Esophagus muscularis mucosa (tissue), 4 donors: ENCODE measurements at regions of chr5 and their contacts with region 1.

Region 1: DNA sequence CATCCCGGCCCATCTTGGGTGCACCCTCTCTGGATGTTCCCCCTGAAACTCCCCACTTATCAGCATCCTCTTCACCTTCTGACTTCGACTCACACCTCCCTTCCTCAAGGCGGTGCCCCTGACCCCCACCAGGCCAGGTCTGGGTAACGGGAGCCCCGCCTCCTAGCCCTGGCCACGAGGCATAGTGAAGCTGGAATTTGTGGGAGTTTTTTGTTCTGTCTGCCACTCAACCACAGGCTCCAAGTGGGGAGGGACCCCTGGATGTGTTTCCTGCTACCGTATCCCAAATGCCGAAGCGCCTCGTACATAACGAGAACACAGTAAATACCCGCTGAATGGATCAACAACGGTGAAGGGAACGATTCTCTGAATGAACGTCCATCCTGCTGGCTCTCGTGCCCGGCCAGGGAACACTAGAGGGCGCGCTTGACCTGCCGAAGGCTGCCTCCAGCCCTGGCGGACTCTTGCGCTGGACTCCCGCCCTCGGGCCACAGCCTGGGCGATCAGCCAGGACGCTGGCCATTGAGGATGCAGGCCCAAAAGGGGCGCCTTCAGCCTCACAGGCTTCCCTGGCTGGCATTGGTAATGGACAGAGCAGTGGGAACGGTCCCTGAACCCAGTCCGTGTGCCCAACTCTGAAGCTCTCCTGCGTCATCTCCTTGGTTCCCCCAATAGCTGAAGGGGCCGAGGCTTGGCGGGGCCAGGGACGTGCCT is 47.3 kb upstream of the PHYKPL start:
- DNase-seq: no peak
- H3K4me3 ChIP-seq: no peak overlapping the region
- H3K27ac ChIP-seq: no peak overlapping the region
- H3K4me1 ChIP-seq: peaks cover 5 to 10% (median 8%) of the 10 kb centered on the region in 4 donors
- H3K27me3 ChIP-seq: peaks cover 0 to 39% (median 0%) of the 10 kb centered on the region in 4 donors
- CTCF ChIP-seq: peak; percentile 88 to 94 (median 88)
- EP300 ChIP-seq: no peak
- POLR2A ChIP-seq: no peak

Region 2: DNA sequence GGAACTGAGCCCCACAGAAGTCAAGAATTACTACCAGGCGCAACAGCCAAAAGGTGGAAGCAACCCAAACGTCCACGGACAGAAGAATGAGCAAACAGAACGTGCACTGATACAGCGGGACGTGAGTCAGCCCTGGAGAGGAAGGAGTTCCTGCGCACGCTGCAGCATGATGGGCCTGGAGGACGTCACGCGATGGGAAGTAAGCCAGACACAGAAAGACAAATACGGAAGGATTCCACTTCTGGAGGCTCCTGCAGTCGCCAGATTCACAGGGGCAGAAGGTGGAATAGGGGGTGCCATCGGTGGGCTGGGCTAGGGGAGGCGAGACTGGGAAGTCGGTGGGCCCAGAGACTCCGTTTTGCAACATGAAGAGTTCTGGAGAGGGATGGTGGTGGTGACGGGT is 33.0 kb after region 1 on chr5:
- intact Hi-C with region 1: no loop called
- DNase-seq: no peak
- H3K4me3 ChIP-seq: no peak overlapping the region
- H3K27ac ChIP-seq: no peak overlapping the region
- H3K4me1 ChIP-seq: no peaks in the 10 kb centered on the region
- H3K27me3 ChIP-seq: no peaks in the 10 kb centered on the region
- CTCF ChIP-seq: no peak
- EP300 ChIP-seq: no peak
- POLR2A ChIP-seq: no peak

Region 3: DNA sequence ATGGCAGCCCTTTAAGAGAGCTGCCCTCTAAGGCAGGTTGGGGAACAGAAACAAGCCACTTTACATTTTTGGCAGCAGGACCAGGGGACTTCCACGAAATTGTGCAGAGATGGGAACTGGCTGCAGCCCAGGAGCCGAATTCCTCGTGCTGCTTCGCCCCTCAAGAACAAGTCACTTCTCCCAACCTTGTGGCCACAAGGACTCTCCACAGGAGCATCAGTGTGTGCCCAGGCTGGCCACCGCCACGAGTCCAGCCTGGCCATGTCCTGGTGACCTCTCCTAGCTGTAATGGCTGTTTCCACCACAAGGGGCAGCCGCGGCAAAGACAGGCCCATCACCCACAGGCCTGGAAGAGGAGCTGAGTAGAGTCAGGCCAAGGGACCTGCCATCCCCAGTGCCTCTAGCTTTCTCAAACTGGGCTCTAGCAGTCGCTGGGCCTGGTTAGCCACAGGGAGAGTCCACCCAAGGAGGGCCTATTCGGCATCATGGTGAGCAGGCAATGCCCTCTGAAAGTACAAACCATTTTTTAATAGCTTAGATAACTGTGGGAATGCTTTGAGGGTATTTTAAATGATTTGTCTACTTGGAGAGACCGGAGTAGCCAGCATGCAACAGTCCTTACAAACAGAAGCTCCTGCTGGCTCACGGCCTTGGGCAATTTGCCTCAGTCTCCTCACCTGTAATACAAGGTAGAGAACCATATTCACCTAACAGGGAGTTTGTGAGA is 181.3 kb after region 1 on chr5:
- intact Hi-C with region 1: loop called (anchors 10 kb)
- DNase-seq: no peak
- H3K4me3 ChIP-seq: no peak overlapping the region
- H3K27ac ChIP-seq: no peak overlapping the region
- H3K4me1 ChIP-seq: peaks cover 4 to 12% (median 8%) of the 10 kb centered on the region in 4 donors
- H3K27me3 ChIP-seq: no peaks in the 10 kb centered on the region
- CTCF ChIP-seq: peak; percentile 68 to 84 (median 75)
- EP300 ChIP-seq: no peak
- POLR2A ChIP-seq: no peak

Region 4: GRCh38 chr5:178551059-178551458 is 271.2 kb after region 1 on chr5:
- intact Hi-C with region 1: loop called (anchors 1 kb)
- DNase-seq: no peak
- H3K4me3 ChIP-seq: no peak overlapping the region
- H3K27ac ChIP-seq: no peak overlapping the region
- H3K4me1 ChIP-seq: peaks cover 0 to 9% (median 0%) of the 10 kb centered on the region in 4 donors
- H3K27me3 ChIP-seq: peaks cover 0 to 3% (median 0%) of the 10 kb centered on the region in 4 donors
- CTCF ChIP-seq: peak; percentile 46 to 58 (median 51)
- EP300 ChIP-seq: no peak
- POLR2A ChIP-seq: no peak

Region 5: DNA sequence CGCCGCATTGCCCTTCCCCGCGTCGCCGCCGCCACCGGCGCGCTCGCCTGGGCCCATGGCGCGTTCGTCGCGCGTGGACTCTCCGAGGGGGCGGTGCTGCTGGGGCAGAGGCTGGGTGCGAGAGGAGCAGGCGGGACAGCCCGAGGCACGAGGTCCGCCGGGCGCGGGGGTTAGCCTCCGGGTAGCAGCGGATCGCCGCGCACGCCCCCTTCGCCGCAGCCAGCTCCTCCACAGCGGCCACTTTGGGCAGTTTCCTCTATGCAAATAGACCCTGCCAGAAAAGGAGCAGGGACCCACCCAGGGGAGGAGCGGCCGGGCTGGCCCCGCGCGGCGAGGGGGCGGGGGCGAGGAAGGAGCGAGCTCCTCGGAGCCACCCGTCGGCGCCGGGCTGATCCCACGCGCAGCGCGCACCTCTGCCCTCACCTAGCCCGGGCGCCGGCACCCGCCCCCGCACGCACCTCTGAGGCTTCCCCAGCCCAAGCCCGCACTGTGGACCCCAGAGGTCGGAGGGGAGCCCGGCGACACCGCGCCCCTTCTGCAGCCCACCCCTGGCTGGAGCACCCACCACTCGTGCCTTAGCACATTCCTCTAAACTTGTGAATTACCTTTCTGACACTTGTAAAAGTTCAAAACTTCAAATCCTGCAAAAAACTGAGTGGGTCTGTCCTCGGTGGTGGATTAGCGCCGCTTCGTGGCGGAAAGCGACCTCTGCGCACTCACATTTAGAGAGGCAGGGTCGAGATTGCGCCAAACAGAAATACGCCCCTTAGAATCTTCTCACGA is 310.4 kb after region 1 on chr5 and contains the start of gene COL23A1:
- intact Hi-C with region 1: loop called (anchors 2 kb)
- DNase-seq: no peak
- H3K4me3 ChIP-seq: peak within 1 kb of the TSS; percentile 57 to 68 (median 62)
- H3K27ac ChIP-seq: peak within 1 kb of the TSS; percentile 46 to 64 (median 54)
- H3K4me1 ChIP-seq: peaks cover 16 to 28% (median 24%) of the 10 kb centered on the region in 4 donors
- H3K27me3 ChIP-seq: peaks cover 0 to 21% (median 0%) of the 10 kb centered on the region in 4 donors
- CTCF ChIP-seq: peak; percentile 68 to 73 (median 69)
- EP300 ChIP-seq: no peak
- POLR2A ChIP-seq: peak; percentile 19
- total RNA-seq, gene COL23A1: 0.83 to 1.8 (median 1.5) TPM

Region 6: DNA sequence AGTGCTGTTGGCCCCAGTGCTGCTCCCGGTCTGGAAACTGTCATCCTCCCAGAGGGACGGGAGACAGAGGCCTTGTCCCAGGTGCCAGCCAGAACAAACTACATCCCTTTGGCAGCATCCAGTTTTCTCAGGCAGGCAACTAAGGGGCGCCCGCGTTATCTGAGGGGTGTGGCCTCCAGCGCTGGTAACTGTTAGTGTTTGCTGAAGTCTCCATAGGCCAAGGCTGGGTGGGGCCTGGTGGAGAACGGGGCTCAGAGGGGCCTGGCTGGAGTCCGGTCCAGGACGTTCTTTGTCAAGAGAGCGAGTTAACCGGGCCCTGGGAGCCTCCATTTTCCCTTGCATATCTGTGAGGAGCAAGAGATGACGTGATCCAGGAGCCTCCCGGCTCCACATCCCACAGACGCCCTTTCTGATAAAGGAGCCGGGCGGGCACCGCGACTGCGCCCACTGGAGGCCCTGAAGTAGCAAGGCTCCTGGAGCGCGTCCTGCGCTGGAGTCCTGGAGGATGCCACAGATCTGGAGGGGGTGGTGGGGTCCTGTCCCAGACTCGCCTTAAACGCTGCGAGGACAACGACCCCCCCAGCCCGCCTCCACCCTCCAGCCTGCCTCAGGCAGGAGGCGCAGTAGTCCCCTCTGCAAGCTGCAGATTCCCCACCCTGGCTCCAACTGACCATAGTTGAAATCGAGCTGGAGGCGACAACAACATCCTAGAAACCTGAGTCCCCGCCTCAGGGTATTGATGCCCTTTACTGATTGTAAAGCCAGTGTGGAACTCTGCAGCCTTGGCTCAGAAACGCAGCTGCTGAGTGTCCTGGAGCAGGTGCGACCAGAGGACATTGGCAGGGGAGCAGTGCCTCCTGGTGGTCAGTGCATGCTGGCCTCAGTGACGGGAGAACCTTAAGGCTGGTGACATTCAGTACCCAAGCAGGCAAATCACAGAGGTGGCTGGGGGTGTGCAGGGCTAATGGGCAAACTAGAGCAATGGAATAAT is 559.1 kb after region 1 on chr5:
- intact Hi-C with region 1: loop called (anchors 10 kb)
- DNase-seq: no peak
- H3K4me3 ChIP-seq: no peak overlapping the region
- H3K27ac ChIP-seq: no peak overlapping the region
- H3K4me1 ChIP-seq: no peaks in the 10 kb centered on the region
- H3K27me3 ChIP-seq: no peaks in the 10 kb centered on the region
- CTCF ChIP-seq: peak; percentile 54 to 64 (median 56)
- EP300 ChIP-seq: no peak
- POLR2A ChIP-seq: no peak